ENCODE measurements at regions of chr11 and their contacts with region 1.

Region 1: GRCh38 chr11:78564490-78565467 is 9.9 kb downstream of the NARS2 start:
- DNase-seq: peak; percentile 42
- H3K27ac ChIP-seq: no peak overlapping the region
- CTCF ChIP-seq: peak; percentile 79

Region 2: DNA sequence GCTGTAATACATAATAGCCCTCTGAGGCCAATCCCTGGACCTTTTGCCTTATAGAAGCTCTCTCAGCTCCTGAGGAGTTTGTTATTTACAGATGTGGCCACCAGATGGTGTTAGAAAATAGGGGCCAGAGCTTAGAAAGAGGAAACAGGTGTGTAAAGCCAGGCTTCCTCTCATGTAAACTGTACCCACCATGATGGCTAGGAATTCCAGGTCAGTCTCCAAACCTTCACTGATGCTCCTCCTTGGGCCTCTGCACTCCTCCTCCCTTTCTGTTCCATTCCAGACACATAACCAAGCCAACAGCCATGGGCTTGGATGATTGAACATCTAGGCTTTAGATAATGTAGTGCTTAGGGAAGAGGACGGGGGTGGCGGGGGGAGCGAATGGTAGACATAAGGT is 336.3 kb before region 1 on chr11:
- CTCF ChIA-PET with region 1: interaction called, 21 read pairs
- POLR2A ChIA-PET with region 1: no interaction called
- DNase-seq: peak; percentile 64
- H3K27ac ChIP-seq: no peak overlapping the region
- CTCF ChIP-seq: peak; percentile 47

Region 3: DNA sequence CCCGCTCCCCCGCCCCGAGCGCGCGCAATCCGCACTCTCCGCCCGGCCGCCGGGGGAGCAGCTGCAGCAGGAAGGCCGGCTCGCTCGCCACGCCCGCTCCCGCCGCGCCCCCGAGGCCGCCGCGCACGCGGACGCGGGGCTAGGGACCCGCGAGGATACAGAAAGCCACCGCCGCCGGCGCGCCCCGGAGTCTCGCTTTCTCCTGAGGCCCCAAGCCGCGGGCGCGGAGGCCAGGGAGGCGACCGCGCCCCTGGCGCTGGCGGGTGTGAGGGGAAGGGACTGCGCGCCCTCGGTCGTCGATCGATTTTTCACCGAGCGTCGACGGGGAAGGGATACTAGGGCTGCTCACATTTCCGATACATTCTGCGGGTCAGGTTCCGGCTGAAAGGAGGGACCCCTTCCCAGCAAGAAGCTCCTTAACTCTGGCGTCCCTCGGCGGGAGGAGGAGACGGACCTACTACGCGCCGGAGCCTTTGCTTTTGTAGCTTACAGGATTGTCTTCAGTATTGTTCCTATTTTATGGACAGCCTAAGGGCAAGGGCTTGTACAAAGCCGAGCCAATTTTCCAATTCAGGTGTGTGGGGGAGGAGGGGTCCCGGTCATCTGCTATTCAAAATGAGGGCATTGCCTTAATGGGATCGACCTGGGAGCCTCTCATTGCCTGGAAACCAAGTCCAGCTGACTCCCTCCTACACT is 146.7 kb before region 1 on chr11:
- CTCF ChIA-PET with region 1: interaction called, 11 read pairs
- POLR2A ChIA-PET with region 1: no interaction called
- DNase-seq: peak; percentile 71
- H3K27ac ChIP-seq: no peak overlapping the region
- CTCF ChIP-seq: 0 out of 2 replicates have a peak, but pooled peaks have one; percentile 21

Region 4: GRCh38 chr11:78510025-78510596 is 54.7 kb before region 1 on chr11:
- CTCF ChIA-PET with region 1: interaction called, 10 read pairs
- POLR2A ChIA-PET with region 1: no interaction called
- DNase-seq: no peak
- H3K27ac ChIP-seq: no peak overlapping the region
- CTCF ChIP-seq: no peak

Measured in RWPE1 (cell line).